ENCODE measurements at regions of chr11 and their contacts with region 1.

Region 1: GRCh38 chr11:47259178-47259977 is 1.6 kb downstream of the NR1H3 start:
- DNase-seq: peak; percentile 57
- H3K4me3 ChIP-seq: no peak overlapping the region
- H3K27ac ChIP-seq: no peak overlapping the region
- H3K4me1 ChIP-seq: peaks cover 22% of the 10 kb centered on the region
- H3K27me3 ChIP-seq: no peaks in the 10 kb centered on the region
- CTCF ChIP-seq: peak; percentile 75 to 80
- POLR2A ChIP-seq: no peak

Region 2: DNA sequence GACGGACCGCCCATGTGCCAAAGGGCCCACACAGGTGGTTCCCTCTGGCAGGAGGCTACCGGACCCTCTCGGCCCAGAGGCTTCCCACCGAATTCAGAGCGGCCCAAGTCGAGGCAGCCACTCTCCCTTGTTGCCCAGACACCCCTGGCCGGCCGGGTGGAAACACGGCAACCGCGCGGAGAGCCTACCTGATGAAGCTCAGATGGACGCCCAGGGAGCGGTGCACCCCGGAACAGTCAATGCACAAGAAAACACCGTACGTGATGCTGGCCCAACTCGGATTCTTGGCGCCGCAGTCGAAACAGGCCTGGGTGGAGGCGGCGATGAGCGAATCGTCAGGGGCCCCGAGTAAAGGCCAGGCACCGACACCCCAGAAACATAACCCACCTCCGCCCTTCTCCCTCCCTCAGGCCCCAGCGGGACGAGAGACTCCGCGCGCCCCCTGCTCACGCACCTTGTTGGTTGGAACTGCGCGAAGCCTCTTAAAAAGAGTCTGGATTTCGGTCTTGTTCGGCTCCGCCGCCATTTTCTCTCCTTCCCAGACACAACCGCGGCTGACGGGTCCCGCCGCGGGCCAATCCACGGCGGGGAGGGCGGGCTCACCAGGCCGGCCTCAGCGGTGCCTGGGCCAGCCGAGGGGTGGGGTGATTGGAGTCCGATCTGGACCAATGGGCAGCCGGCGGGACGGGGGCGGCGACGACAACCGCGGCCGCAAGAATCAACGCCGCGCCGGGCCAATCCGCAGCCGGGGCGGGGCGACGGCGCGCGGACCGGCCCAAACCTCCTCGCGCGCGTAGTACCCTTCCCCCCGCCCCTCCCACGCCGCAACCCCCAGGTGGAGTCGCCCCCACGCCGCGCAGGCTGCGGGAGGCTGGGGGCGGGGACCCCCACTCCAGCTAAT is 82.8 kb before region 1 on chr11 and contains the start of gene ARFGAP2:
- CTCF ChIA-PET with region 1: interaction called, 67 read pairs
- POLR2A ChIA-PET with region 1: no interaction called
- dilution Hi-C with region 1: no loop called
- intact Hi-C with region 1: loop called (anchors 1 kb)
- DNase-seq: peak; percentile 97
- H3K4me3 ChIP-seq: peak within 1 kb of the TSS; percentile 69 to 95 (median 79)
- H3K27ac ChIP-seq: peak within 1 kb of the TSS; percentile 91
- H3K4me1 ChIP-seq: peaks cover 13% of the 10 kb centered on the region
- H3K27me3 ChIP-seq: no peaks in the 10 kb centered on the region
- CTCF ChIP-seq: no peak
- POLR2A ChIP-seq: peak; percentile 80
- total RNA-seq, gene ARFGAP2: 78.9 and 84.3 TPM in 2 replicates

Region 3: DNA sequence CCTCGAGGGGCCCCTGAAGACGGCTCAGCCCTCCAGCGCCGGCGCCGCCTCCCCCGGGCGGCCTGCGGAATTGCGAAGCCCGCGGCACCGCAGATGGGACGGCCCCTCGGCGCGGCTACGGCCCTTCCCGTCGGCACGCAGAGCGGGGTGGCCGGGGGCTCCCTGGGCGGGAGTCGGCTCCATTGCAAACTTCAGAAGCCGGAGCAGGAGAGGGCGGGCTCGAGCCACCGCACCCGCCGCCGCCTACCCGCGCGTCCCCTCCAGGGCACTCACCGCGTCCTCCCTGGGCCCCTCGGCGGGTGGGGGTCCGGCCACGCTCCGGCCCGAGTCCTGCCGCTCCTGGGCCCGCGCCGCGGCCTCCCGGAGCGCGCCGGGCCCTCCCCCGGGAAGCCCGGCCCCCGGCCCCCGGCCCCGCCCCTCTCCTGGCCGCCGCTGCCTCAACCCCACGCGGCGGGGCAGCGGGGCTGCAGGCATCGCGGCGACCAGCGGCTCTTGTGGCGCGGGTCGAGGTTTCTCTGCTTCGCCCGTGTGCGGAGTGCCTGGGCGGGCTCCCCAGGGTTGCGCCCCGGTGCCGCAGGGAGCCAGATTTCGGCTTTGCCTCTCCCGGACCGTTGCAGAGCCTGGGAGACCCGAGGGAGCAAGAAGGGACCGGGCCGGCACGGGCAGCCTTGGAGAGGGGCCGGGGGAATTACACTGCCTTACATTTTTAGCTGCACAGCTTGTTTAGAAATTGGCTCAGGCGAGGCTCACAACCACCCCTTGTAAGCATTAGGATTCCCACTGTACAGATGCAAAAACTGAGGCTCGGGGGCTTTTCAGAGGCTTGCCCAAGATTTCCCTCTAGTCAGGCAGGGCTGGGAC is 73.1 kb before region 1 on chr11 and contains the start of gene PACSIN3:
- CTCF ChIA-PET with region 1: interaction called, 67 read pairs
- POLR2A ChIA-PET with region 1: no interaction called
- dilution Hi-C with region 1: no loop called
- intact Hi-C with region 1: no loop called
- DNase-seq: peak; percentile 60
- H3K4me3 ChIP-seq: peak within 1 kb of the TSS; percentile 65 to 76 (median 67)
- H3K27ac ChIP-seq: no peak within 1 kb of the TSS
- H3K4me1 ChIP-seq: peaks cover 16% of the 10 kb centered on the region
- H3K27me3 ChIP-seq: peaks cover 0 to 3% of the 10 kb centered on the region in 2 experiments
- CTCF ChIP-seq: peak in 1 of 2 donors; percentile 4
- POLR2A ChIP-seq: peak; percentile 39
- total RNA-seq, gene PACSIN3: 27.2 and 29.0 TPM in 2 replicates

Region 4: DNA sequence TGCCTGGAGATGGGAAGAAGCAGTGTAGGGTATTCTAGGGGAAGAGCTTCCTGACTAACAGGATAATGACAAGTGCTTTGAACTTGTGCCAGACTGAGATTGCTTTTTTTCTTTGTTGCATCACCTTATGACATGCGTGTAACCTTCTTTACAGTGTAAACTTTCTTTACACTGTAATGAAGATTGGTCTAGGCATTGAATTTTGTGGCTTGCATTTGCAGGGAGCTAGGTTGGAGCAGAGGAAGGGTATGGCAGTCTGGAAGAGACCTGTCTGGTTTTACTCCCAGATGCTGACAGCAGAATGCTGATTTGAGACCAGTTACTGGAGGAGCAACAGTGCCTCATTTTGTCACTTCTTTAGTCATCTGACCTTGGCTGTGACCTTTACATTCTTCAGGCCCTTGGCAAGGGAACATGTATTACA is 39.0 kb before region 1 on chr11:
- CTCF ChIA-PET with region 1: interaction called, 16 read pairs
- POLR2A ChIA-PET with region 1: no interaction called
- dilution Hi-C with region 1: no loop called
- intact Hi-C with region 1: loop called (anchors 2 kb)
- DNase-seq: peak; percentile 90
- H3K4me3 ChIP-seq: no peak overlapping the region
- H3K27ac ChIP-seq: peak overlapping the region; percentile 94
- H3K4me1 ChIP-seq: peaks cover 44% of the 10 kb centered on the region
- H3K27me3 ChIP-seq: no peaks in the 10 kb centered on the region
- CTCF ChIP-seq: no peak
- POLR2A ChIP-seq: peak; percentile 44

Region 5: DNA sequence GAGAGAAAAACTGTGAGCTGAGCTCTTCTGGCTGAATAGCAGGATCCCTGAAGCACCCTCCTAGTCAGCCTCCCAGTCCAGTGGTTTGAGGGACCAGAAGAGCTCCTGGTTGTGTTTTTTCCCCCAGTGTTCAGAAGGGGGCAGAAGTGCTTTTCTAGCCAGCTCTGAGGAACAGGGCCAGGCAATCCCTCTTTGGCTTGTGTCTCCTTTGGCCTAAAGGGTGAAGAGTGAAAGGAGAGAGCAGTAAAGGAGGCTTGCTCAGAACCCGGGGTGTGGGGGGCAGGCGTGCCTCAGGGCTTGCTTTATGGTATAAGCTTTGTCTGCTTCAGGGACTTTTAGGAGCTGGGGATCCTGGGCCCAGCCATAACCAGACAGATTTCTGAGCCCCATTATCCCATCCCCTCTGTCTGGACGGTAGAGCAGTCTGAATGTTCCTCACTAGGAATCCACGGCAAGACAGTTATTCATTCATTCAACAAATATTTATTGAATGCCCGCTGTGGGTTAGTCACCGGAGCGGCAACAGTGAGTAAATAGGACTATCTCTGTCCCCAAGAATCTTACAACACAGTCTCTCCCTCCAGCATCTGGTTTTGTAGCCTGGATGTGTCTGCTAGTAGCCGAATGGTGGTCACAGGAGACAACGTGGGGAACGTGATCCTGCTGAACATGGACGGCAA is 25.2 kb before region 1 on chr11:
- CTCF ChIA-PET with region 1: interaction called, 63 read pairs
- POLR2A ChIA-PET with region 1: no interaction called
- dilution Hi-C with region 1: no loop called
- intact Hi-C with region 1: no loop called
- DNase-seq: peak; percentile 29
- H3K4me3 ChIP-seq: no peak overlapping the region
- H3K27ac ChIP-seq: no peak overlapping the region
- H3K4me1 ChIP-seq: peaks cover 15% of the 10 kb centered on the region
- H3K27me3 ChIP-seq: no peaks in the 10 kb centered on the region
- CTCF ChIP-seq: peak in 1 of 2 donors; percentile 27
- POLR2A ChIP-seq: no peak

Region 6: GRCh38 chr11:47248664-47249377 is 10.6 kb before region 1 on chr11 and contains the start of gene ACP2:
- CTCF ChIA-PET with region 1: interaction called, 38 read pairs
- POLR2A ChIA-PET with region 1: interaction called, 5 read pairs
- dilution Hi-C with region 1: no loop called
- intact Hi-C with region 1: no loop called
- DNase-seq: peak; percentile 88
- H3K4me3 ChIP-seq: peak within 1 kb of the TSS; percentile 50 to 74 (median 68)
- H3K27ac ChIP-seq: peak within 1 kb of the TSS; percentile 49
- H3K4me1 ChIP-seq: peaks cover 13% of the 10 kb centered on the region
- H3K27me3 ChIP-seq: no peaks in the 10 kb centered on the region
- CTCF ChIP-seq: peak; percentile 7 to 34
- POLR2A ChIP-seq: peak; percentile 92
- total RNA-seq, gene ACP2: 35.6 and 39.7 TPM in 2 replicates

Region 7: DNA sequence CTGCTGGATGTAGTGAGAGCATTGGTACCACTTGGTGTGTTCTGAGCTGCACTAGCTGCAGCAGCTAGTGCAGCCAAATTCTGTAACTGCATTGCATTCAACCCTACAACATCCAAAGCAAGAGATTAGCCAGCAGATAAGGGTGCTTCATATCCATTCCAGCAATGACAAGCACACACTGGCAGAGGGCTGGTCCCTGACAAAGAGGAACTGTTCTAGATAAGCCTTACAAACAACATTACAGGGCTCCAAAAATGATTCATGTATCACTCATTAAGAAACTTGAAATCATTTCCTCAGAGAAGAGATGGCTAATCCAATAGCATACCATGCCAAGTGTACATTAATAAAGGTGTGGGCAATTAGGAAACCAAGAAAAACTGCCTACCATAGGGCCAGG is 217.9 kb after region 1 on chr11:
- CTCF ChIA-PET with region 1: no interaction called
- POLR2A ChIA-PET with region 1: no interaction called
- dilution Hi-C with region 1: no loop called
- intact Hi-C with region 1: no loop called
- DNase-seq: peak; percentile 67
- H3K4me3 ChIP-seq: no peak overlapping the region
- H3K27ac ChIP-seq: peak overlapping the region; percentile 9
- H3K4me1 ChIP-seq: peaks cover 23% of the 10 kb centered on the region
- H3K27me3 ChIP-seq: no peaks in the 10 kb centered on the region
- CTCF ChIP-seq: no peak
- POLR2A ChIP-seq: no peak